ENCODE measurements at regions of chr15 and their contacts with region 1.

Region 1: GRCh38 chr15:34587717-34588674 is 4.5 kb upstream of the GOLGA8B start:
- DNase-seq: peak; percentile 60
- ATAC-seq: peak; percentile 61
- H3K4me3 Mint-ChIP-seq: peak overlapping the region; percentile 59
- H3K27ac Mint-ChIP-seq: peak overlapping the region; percentile 94
- H3K4me1 Mint-ChIP-seq: peaks cover 24% of the 10 kb centered on the region
- H3K27me3 Mint-ChIP-seq: peaks cover 19% of the 10 kb centered on the region
- CTCF ChIP-seq: peak; percentile 31; the same call in 1 of the 2 replicates

Region 2: GRCh38 chr15:34337557-34338306 is 250.3 kb before region 1 on chr15 and contains the start of gene SLC12A6:
- CTCF ChIA-PET with region 1: interaction called, 13 read pairs
- POLR2A ChIA-PET with region 1: interaction called, 8 read pairs
- DNase-seq: peak; percentile 91
- ATAC-seq: peak; percentile 91
- H3K4me3 Mint-ChIP-seq: peak within 1 kb of the TSS; percentile 97
- H3K27ac Mint-ChIP-seq: peak within 1 kb of the TSS; percentile 95
- H3K4me1 Mint-ChIP-seq: peaks cover 22% of the 10 kb centered on the region
- H3K27me3 Mint-ChIP-seq: peaks cover 6% of the 10 kb centered on the region
- CTCF ChIP-seq: no peak
- total RNA-seq, gene SLC12A6: 13.3 to 16.2 TPM (median 14.7 TPM) in 3 replicates